Dorsolateral prefrontal cortex (tissue), 120 donors: ENCODE measurements at regions of chr18 and their contacts with region 1.

Region 1: GRCh38 chr18:48575658-48576456 is 37.0 kb downstream of the CTIF start:
- DNase-seq: peak in 9 of 10 donors; percentile 60 to 85 (median 80)
- H3K4me3 ChIP-seq: peak overlapping the region in 25 of 59 donors; percentile 1 to 39 (median 18)
- H3K27ac ChIP-seq: peak overlapping the region; percentile 52 to 99 (median 96)
- H3K27me3 ChIP-seq: no peaks in the 10 kb centered on the region
- CTCF ChIP-seq: peak in 5 of 56 donors; percentile 4 to 36 (median 19)

Region 2: GRCh38 chr18:48500517-48500916 is 75.3 kb before region 1 on chr18:
- intact Hi-C with region 1: no loop called
- DNase-seq: no peak
- H3K4me3 ChIP-seq: no peak overlapping the region
- H3K27ac ChIP-seq: no peak overlapping the region
- H3K27me3 ChIP-seq: no peaks in the 10 kb centered on the region
- CTCF ChIP-seq: no peak

Region 3: DNA sequence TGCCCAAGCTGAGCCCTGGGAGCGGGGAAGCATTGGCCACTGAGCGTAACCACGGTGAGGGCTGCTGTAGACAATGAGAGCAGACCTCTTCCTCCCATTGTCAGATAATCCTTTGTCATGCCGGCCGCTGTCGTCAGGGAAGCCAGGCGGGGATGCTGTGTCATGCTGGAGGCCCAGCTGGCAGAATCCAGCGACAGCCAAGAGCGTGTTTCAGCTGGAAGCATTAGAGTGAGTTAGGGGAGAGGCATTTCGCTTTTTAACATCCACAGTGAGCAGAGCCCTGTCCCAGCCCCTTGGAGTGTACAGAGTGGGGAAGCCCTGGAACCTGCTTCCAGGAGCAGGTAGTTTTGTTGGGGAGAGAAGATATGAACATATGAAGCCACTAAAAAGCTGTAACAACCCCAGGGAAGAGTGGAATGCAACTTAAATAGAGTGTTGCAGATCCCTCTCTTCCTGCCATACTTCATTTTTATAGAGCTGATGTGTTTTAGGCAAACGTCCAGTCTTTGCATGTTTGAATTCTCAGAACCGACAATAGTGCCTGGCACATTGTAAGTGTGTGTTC is 30.0 kb before region 1 on chr18:
- intact Hi-C with region 1: loop called in 1 of 2 experiments (anchors 2 kb)
- DNase-seq: peak; percentile 53 to 92 (median 89)
- H3K4me3 ChIP-seq: peak overlapping the region in 27 of 59 donors; percentile 1 to 40 (median 21)
- H3K27ac ChIP-seq: peak overlapping the region in 52 of 59 donors; percentile 9 to 75 (median 54)
- H3K27me3 ChIP-seq: no peaks in the 10 kb centered on the region
- CTCF ChIP-seq: peak in 25 of 56 donors; percentile 8 to 54 (median 26)